ENCODE measurements at regions of chr3 and their contacts with region 1.

Region 1: GRCh38 chr3:174251681-174252080 is 607.5 kb upstream of the NAALADL2 start:
- DNase-seq: no peak
- ATAC-seq: no peak
- H3K4me3 ChIP-seq: no peak overlapping the region
- H3K27ac ChIP-seq: no peak overlapping the region
- H3K4me1 ChIP-seq: peaks cover 0 to 8% (median 0%) of the 10 kb centered on the region in 9 donors
- H3K27me3 ChIP-seq: no peaks in the 10 kb centered on the region
- CTCF ChIP-seq: no peak

Region 2: DNA sequence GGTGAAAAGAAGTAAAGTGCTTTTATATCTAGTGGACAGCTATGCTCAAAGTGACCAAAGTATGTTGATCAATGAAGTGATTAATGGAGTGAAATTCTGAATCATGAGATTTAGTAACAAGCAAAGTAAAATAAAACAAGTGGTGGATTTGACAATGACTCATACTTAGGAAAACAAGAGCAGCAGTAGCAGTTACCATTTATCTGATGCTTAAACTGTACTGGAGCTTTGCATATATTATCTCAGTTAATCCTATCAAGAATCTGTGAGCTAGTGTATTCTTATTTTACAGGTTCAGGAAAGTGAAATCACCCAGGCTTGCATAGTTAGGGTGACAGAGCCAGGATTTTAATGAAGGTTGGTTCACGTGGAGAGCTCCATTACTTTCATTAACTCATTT is 1060.1 kb before region 1 on chr3:
- intact Hi-C with region 1: no loop called
- DNase-seq: no peak
- ATAC-seq: no peak
- H3K4me3 ChIP-seq: no peak overlapping the region
- H3K27ac ChIP-seq: no peak overlapping the region
- H3K4me1 ChIP-seq: no peaks in the 10 kb centered on the region
- H3K27me3 ChIP-seq: no peaks in the 10 kb centered on the region
- CTCF ChIP-seq: no peak

Region 3: GRCh38 chr3:174270841-174271240 is 19.2 kb after region 1 on chr3:
- intact Hi-C with region 1: loop called in 1 of 10 experiments (anchors 2 kb)
- DNase-seq: no peak
- ATAC-seq: no peak
- H3K4me3 ChIP-seq: no peak overlapping the region
- H3K27ac ChIP-seq: no peak overlapping the region
- H3K4me1 ChIP-seq: no peaks in the 10 kb centered on the region
- H3K27me3 ChIP-seq: no peaks in the 10 kb centered on the region
- CTCF ChIP-seq: no peak